ENCODE measurements at regions of chr1 and their contacts with region 1.

Region 1: DNA sequence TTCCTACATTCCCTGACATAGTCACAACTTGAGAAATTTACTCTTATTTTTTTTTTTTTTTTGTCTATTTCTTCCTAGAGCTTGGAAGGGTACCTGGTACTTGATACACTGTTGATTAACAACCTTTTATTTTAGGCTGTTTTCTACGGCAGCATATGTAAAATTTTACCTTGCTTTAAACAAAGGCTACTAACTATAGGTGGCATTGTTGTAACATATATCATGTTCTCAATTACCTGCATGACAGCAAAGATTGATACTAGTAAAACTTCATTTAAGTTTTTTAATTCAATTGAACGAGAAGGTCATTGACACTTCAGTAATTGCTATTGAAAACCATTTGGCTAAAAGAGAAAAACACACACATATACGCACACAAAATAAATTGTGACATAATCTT is 238.3 kb upstream of the ESRRG start:
- DNase-seq: no peak
- H3K4me3 ChIP-seq: no peak overlapping the region
- H3K27ac ChIP-seq: no peak overlapping the region
- H3K27me3 ChIP-seq: no peaks in the 10 kb centered on the region
- CTCF ChIP-seq: peak in 11 of 56 donors; percentile 15 to 41 (median 28)

Region 2: DNA sequence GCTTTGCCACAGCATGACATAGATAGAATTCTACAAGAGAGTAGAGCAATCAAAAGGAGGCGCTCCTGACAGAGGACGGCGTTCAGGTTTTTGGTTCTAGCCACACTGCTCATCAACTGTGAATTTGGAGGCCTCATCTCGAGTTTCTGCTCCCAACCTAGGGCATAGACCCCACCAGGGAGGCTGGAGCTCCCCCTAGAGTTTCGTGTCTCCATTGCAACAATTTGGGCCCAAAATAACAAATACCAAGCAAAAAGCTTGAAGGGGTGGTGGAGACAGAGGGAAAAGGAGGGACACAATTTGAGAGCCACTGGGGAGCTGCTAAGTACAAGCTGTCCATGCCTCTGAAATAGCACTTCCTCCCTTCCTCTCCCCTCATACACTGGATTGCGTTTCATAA is 372.4 kb after region 1 on chr1:
- intact Hi-C with region 1: loop called in 1 of 2 experiments (anchors 5 kb)
- DNase-seq: peak in 1 of 10 donors; percentile 34
- H3K4me3 ChIP-seq: no peak overlapping the region
- H3K27ac ChIP-seq: no peak overlapping the region
- H3K27me3 ChIP-seq: peaks cover 0 to 2% (median 0%) of the 10 kb centered on the region in 45 donors
- CTCF ChIP-seq: peak in 55 of 56 donors; percentile 23 to 73 (median 57)

Measured in dorsolateral prefrontal cortex (tissue), 120 donors.